Activated CD4-positive, alpha-beta memory T cell treated with anti-CD3 and anti-CD28 coated beads for 36 hours (primary cell): ENCODE measurements at regions of chr18 and their contacts with region 1.

Region 1: DNA sequence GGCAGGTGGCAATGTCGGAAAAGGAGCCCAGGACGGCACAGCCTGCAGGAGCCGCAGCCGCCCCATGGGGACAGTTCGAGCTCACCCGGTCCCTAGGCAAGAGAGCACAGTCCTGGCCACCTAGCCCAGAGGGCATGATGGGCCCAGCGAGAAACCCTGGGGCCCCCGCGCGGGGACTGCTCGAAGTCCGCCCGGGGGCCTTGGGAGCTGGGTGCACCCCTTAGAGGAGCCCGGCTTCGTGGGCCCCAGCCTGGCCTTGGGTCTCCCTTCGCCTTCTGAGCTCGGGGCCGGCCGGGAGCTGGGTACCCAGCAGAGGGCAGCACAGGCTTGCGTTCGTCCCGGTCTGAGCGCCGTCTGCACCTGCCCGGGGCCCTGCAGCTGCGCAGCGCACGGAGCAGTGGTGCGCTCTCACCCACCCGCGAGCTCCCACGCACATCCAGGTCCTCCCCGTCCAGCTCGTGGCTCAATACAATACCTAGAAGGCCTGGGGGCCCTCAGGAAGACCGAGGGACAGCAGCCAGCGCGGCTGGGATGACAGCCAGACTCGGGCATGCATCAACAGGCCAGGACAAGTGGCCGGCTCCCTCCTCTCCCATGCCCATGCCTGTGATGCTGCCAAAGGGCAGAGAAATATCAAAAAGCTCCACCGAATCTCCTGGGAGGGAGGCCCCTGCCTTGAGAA is 96.2 kb upstream of the ZNF532 start:
- DNase-seq: peak; percentile 85
- H3K4me3 Mint-ChIP-seq: no peak overlapping the region
- H3K27ac Mint-ChIP-seq: no peak overlapping the region
- H3K4me1 Mint-ChIP-seq: peaks cover 3% of the 10 kb centered on the region
- H3K27me3 Mint-ChIP-seq: peaks cover 35% of the 10 kb centered on the region

Region 2: GRCh38 chr18:58043491-58044379 is 724.7 kb before region 1 on chr18 and contains the start of gene NEDD4L:
- CTCF ChIA-PET with region 1: no interaction called
- POLR2A ChIA-PET with region 1: no interaction called
- intact Hi-C with region 1: loop called (anchors 10 kb)
- DNase-seq: peak; percentile 89
- H3K4me3 Mint-ChIP-seq: peak within 1 kb of the TSS; percentile 86
- H3K27ac Mint-ChIP-seq: peak within 1 kb of the TSS; percentile 26
- H3K4me1 Mint-ChIP-seq: peaks cover 20% of the 10 kb centered on the region
- H3K27me3 Mint-ChIP-seq: peaks cover 25% of the 10 kb centered on the region
- total RNA-seq, gene NEDD4L: 3.4 to 3.8 TPM

Region 3: DNA sequence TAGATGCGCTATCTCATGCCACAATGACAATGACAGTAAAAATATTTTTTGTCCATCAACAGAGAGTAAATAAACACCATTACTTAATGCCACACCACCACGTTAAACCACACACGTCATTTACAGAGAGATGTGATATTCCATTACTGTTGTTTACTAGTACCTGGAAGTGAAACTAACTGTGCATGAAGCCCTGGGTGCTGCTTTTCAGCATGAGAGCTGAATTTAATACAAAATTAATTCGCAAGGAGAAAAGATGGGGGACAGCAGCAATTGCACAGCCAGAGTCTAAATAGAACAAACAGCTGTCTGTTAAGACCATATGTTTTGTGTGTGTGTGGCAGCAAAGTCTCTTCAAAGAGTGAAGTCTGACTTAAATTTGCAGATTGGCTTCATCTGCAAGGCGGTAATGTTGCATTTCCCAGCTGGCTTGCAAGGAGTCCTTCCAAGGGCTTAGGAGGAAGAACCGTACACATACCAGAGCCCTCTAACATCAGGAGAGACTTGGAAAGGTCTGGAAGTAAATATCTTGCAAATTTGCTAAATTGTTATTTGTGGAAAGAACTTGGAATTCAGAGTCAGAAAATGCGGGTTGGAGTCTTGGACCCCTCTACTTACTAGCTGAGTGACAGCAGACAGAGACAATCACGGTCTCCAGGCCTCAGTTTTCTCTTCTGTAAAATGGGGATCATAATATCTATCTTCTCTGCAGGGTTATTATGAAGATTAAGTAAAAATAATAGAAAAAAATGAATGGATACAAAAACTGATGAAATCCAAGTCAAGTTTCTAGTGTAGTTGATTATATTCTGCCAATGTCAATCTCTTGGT is 267.2 kb before region 1 on chr18:
- CTCF ChIA-PET with region 1: interaction called, 41 read pairs
- POLR2A ChIA-PET with region 1: no interaction called
- intact Hi-C with region 1: no loop called
- DNase-seq: no peak
- H3K4me3 Mint-ChIP-seq: no peak overlapping the region
- H3K27ac Mint-ChIP-seq: no peak overlapping the region
- H3K4me1 Mint-ChIP-seq: peaks cover 5% of the 10 kb centered on the region
- H3K27me3 Mint-ChIP-seq: peaks cover 8% of the 10 kb centered on the region

Region 4: DNA sequence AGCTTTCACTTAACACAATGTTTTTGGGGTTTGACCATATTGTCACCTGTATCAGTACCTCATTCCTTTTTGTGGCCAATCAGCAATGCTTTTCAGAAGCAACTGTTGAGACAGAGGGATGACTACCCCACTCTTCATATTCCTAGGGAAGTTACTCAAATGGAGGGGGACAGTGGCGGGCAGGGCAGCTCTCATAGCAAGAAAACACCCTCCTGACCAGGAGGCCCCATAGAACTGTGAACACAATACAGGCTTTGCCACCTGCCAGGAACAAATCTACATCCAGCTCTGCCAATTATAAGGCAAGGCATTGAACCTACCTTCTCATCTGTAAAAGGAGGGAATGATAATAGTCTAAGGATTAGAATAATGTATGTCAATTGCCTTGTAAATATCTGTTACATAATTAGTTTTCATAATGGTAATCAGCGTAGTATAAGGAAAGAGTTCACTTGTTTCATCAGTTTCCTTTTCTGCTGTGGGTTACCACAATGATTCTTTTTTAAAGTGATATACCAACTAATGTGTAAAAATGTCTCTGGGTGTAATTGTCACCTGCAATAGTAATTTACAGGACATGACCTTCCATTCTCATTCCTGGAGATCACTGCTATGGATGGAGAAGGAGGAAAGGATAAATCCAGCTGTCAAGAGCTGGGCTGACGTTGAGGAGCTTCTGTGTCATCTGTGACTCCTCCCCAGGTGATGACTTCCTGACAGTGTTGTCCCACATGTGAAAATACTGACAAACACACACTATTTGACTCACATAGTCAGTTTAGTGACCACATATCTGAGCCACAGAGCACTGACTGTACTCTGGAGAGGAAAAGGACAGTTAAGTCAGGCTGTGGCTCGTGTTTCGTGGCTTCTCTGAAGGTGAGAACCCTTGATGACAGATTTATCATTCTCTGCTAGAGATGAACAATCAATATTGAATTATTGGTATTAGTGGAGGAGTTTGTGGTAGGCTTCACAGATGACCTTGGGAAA is 153.0 kb before region 1 on chr18:
- CTCF ChIA-PET with region 1: interaction called, 3 read pairs
- POLR2A ChIA-PET with region 1: no interaction called
- intact Hi-C with region 1: loop called (anchors 1 kb)
- DNase-seq: peak; percentile 87
- H3K4me3 Mint-ChIP-seq: peak overlapping the region; percentile 51
- H3K27ac Mint-ChIP-seq: peak overlapping the region; percentile 90
- H3K4me1 Mint-ChIP-seq: peaks cover 54% of the 10 kb centered on the region
- H3K27me3 Mint-ChIP-seq: peaks cover 4% of the 10 kb centered on the region

Region 5: DNA sequence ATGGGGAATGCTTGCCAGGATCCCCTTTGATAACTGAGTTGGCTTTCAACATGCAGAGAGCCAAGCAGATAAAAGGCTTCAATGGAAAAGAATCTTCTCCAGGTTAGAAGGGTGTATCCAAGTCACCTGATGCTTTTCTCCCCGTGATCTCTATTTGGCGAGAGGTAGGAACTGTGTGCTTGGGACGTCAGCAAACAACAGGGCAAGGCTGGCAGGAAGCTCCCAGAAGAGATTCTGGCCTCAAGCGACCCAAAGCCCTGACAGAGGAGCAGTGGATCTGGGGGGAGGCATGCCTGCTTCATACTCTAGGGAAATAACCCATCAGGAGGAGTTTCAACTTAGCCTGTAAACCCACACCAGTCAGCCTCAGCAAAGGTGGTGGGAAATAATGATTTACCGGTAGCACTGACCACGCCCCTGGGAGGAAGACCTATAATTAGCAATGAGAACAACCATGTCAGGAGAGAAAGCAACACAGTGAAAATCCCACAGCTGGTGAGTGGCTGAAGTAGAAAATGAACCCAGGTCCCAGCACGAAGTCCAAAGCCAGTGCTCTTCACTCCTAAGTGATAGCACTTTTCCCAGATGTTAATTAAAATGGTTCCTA is 295.0 kb after region 1 on chr18:
- CTCF ChIA-PET with region 1: interaction called, 109 read pairs
- POLR2A ChIA-PET with region 1: no interaction called
- intact Hi-C with region 1: no loop called
- DNase-seq: no peak
- H3K4me3 Mint-ChIP-seq: no peak overlapping the region
- H3K27ac Mint-ChIP-seq: no peak overlapping the region
- H3K4me1 Mint-ChIP-seq: no peaks in the 10 kb centered on the region
- H3K27me3 Mint-ChIP-seq: peaks cover 16% of the 10 kb centered on the region

Region 6: GRCh38 chr18:59402432-59403090 is 634.1 kb after region 1 on chr18:
- CTCF ChIA-PET with region 1: interaction called, 12 read pairs
- POLR2A ChIA-PET with region 1: no interaction called
- intact Hi-C with region 1: no loop called
- DNase-seq: peak; percentile 85
- H3K4me3 Mint-ChIP-seq: no peak overlapping the region
- H3K27ac Mint-ChIP-seq: no peak overlapping the region
- H3K4me1 Mint-ChIP-seq: no peaks in the 10 kb centered on the region
- H3K27me3 Mint-ChIP-seq: peaks cover 3% of the 10 kb centered on the region